ENCODE measurements at regions of chrX and their contacts with region 1.

Region 1: GRCh38 chrX:120365320-120365719 is 3.4 kb downstream of the ATP1B4 start:
- DNase-seq: peak; percentile 6
- ATAC-seq: peak; percentile 70
- H3K4me3 ChIP-seq: no peak overlapping the region
- H3K27ac ChIP-seq: no peak overlapping the region
- H3K4me1 ChIP-seq: no peaks in the 10 kb centered on the region
- H3K27me3 ChIP-seq: no peaks in the 10 kb centered on the region
- CTCF ChIP-seq: peak; percentile 51
- EP300 ChIP-seq: no peak
- POLR2A ChIP-seq: no peak
- RAD21 ChIP-seq: no peak

Region 2: GRCh38 chrX:120477453-120477852 is 112.1 kb after region 1 on chrX:
- CTCF ChIA-PET with region 1: no interaction called
- POLR2A ChIA-PET with region 1: no interaction called
- in situ Hi-C with region 1: loop called (anchors 10 kb)
- intact Hi-C with region 1: loop called (anchors 1 kb)
- DNase-seq: no peak
- ATAC-seq: no peak
- H3K4me3 ChIP-seq: no peak overlapping the region
- H3K27ac ChIP-seq: no peak overlapping the region
- H3K4me1 ChIP-seq: peaks cover 11% of the 10 kb centered on the region
- H3K27me3 ChIP-seq: no peaks in the 10 kb centered on the region
- CTCF ChIP-seq: no peak
- EP300 ChIP-seq: no peak
- POLR2A ChIP-seq: no peak
- RAD21 ChIP-seq: no peak

Measured in HepG2 (cell line).